Adrenal gland (tissue), 19 donors: ENCODE measurements at regions of chr2 and their contacts with region 1.

Region 1: DNA sequence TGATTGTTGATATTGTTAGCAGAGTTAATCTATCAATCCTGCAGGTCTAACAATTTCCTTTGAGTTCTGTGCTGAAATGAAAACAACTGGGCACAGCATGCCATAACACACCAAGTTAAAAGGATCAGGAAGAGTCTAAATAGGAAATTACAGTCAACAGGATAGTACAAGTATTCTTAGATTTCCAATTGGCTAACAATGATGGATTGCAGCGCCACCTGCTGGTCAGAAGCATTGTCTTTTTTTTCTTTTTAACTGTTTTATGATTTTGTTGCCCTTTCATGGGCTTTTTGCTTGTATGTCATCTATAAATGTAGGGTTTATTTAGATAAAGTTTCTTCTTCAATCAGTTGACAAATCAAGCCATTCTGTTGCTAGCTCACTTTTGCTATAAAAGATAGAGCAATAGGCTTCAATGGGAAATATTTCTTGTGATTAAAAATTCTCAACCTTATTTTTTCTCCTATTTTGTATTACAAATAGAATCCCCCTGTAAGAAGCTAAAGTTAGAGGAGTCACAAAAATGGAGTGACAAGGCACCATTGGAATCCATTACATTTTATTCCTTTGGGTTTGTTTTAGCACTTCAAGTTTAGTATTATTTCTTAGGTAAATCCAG is 40.8 kb upstream of the RPRM start:
- DNase-seq: peak; percentile 35 to 86 (median 76)
- H3K4me3 ChIP-seq: no peak overlapping the region
- H3K27ac ChIP-seq: no peak overlapping the region
- H3K4me1 ChIP-seq: no peaks in the 10 kb centered on the region
- H3K27me3 ChIP-seq: no peaks in the 10 kb centered on the region
- CTCF ChIP-seq: peak; percentile 73 to 95 (median 80)
- POLR2A ChIP-seq: no peak

Region 2: GRCh38 chr2:152740743-152741328 is 778.5 kb before region 1 on chr2:
- intact Hi-C with region 1: loop called in 1 of 2 experiments (anchors 10 kb)
- DNase-seq: no peak
- H3K4me3 ChIP-seq: no peak overlapping the region
- H3K27ac ChIP-seq: no peak overlapping the region
- H3K4me1 ChIP-seq: peaks cover 0 to 6% of the 10 kb centered on the region in 2 donors
- H3K27me3 ChIP-seq: no peaks in the 10 kb centered on the region
- CTCF ChIP-seq: peak; percentile 81 to 99 (median 94)
- POLR2A ChIP-seq: no peak

Region 3: DNA sequence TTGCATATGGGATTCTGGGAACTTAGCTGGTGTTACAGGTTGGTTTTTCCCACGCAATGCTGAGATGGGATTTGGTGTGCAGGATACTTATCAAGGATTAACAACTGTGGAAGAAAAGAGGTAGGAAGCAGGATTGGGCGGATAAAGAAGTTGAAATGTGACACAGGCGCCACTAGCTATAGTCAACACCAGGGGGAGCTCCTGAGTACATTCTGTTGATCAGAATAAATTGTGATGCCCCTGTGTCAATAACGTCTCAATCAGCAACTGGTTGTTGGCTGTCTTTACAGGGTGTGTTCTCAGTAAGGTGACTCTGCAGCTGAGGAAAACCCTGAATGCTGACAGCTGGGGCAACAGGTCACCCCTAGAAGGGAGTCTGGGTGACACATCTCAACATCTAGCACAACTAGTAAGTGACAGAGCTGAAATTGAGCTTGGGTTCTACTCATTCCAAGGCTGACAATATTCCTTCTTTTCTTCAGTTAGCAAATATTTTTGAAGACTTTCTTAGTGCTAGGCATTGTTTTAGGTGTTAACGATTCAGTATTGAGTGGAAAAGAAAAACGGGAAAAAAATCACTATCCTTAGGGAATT is 657.9 kb before region 1 on chr2:
- intact Hi-C with region 1: loop called in 1 of 2 experiments (anchors 10 kb)
- DNase-seq: peak in 6 of 7 donors; percentile 32 to 66 (median 62)
- H3K4me3 ChIP-seq: no peak overlapping the region
- H3K27ac ChIP-seq: no peak overlapping the region
- H3K4me1 ChIP-seq: no peaks in the 10 kb centered on the region
- H3K27me3 ChIP-seq: no peaks in the 10 kb centered on the region
- CTCF ChIP-seq: peak; percentile 58 to 75 (median 62)
- POLR2A ChIP-seq: no peak